Activated CD8-positive, alpha-beta T cell treated with anti-CD3 and anti-CD28 coated beads for 36 hours (primary cell): ENCODE measurements at regions of chr2 and their contacts with region 1.

Region 1: GRCh38 chr2:63888490-63889402 is 47.0 kb downstream of the UGP2 start:
- DNase-seq: peak; percentile 72
- ATAC-seq: peak; percentile 95
- H3K4me3 Mint-ChIP-seq: no peak overlapping the region
- H3K27ac Mint-ChIP-seq: peak overlapping the region; percentile 65
- H3K4me1 Mint-ChIP-seq: peaks cover 13% of the 10 kb centered on the region
- H3K27me3 Mint-ChIP-seq: no peaks in the 10 kb centered on the region
- CTCF ChIP-seq: peak; percentile 80

Region 2: DNA sequence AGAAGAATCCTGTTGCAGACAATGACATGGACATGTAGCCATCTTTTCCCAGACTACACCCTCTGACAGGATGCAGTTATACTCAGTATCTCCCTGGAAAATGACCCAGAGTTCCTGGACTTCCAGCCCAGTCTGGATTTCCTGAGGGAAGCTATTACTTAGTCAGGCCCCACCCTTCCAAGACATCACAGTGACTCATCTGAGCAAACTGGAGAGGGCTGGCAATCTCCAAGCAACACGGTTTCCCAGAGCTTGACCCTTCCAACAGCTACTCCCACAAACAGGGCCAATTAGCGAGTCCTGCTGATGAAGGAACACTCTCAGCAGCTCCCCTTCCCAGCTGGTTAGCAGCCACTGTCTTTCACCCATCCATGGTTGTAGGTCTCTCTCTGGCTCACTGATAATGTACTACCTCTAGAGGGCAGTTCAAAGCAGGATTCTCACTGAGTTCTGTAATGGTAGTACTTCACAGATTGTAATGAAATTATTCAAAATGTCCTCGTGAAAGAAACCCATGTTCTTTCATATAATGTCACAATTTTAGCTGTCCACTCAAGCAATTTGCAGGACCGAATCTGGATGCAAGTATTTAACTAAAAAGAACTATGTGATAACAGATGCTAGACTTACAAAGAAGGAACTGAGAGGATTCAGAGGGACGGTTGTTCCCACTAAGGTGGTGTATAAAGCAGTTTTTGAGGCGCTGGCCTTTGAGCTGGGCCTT is 189.8 kb before region 1 on chr2:
- CTCF ChIA-PET with region 1: interaction called, 8 read pairs
- POLR2A ChIA-PET with region 1: no interaction called
- intact Hi-C with region 1: loop called (anchors 5 kb)
- DNase-seq: no peak
- ATAC-seq: peak; percentile 86
- H3K4me3 Mint-ChIP-seq: no peak overlapping the region
- H3K27ac Mint-ChIP-seq: no peak overlapping the region
- H3K4me1 Mint-ChIP-seq: no peaks in the 10 kb centered on the region
- H3K27me3 Mint-ChIP-seq: no peaks in the 10 kb centered on the region
- CTCF ChIP-seq: peak; percentile 38